Naive thymus-derived CD4-positive, alpha-beta T cell (primary cell): ENCODE measurements at regions of chr2 and their contacts with region 1.

Region 1: DNA sequence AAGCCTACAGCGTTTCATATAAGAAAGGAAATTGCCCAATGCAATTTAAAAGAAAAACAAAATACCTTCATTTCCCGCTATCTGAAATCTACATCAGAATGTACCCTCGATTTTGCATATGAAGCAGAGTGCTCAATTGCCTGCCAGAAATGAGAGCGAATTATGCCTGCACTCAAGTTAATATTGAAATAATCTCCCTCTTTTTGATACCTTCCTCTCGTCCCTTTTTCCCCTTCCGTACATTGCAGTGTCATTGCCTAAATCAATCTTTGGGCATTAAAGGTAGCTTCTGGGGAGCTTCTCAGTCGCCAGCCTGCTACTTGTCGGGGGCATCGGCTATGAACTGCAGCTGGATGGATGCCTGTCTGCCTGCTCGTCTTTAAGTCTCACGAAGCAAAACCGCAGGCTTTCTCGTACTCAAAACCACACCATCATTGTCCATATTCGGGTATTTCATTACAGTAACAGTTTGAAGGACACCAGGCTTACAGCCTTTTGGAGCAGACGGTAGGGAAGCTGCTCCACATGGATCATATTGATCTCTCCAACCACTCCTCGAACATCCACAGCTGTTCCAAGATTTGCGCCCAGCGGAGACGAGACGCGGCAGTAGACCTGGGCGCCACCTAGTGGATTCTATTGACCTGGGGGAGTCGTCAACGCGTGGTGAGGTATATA is 64.0 kb upstream of the HNRNPA3 start:
- DNase-seq: peak; percentile 60 to 77 (median 71)
- ATAC-seq: peak; percentile 96
- H3K4me3 ChIP-seq: peak overlapping the region; percentile 72
- H3K4me3 Mint-ChIP-seq: peak overlapping the region; percentile 84 to 94 (median 89)
- H3K27ac ChIP-seq: no peak overlapping the region
- H3K27ac Mint-ChIP-seq: peak overlapping the region in 8 of 9 donors; percentile 3 to 33 (median 11)
- H3K4me1 ChIP-seq: peaks cover 6 to 14% of the 10 kb centered on the region in 2 donors
- H3K4me1 Mint-ChIP-seq: peaks cover 8 to 16% (median 11%) of the 10 kb centered on the region in 7 donors
- H3K27me3 ChIP-seq: peaks cover 0 to 3% of the 10 kb centered on the region in 2 donors
- H3K27me3 Mint-ChIP-seq: peaks cover 33 to 73% (median 52%) of the 10 kb centered on the region in 5 donors

Region 2: DNA sequence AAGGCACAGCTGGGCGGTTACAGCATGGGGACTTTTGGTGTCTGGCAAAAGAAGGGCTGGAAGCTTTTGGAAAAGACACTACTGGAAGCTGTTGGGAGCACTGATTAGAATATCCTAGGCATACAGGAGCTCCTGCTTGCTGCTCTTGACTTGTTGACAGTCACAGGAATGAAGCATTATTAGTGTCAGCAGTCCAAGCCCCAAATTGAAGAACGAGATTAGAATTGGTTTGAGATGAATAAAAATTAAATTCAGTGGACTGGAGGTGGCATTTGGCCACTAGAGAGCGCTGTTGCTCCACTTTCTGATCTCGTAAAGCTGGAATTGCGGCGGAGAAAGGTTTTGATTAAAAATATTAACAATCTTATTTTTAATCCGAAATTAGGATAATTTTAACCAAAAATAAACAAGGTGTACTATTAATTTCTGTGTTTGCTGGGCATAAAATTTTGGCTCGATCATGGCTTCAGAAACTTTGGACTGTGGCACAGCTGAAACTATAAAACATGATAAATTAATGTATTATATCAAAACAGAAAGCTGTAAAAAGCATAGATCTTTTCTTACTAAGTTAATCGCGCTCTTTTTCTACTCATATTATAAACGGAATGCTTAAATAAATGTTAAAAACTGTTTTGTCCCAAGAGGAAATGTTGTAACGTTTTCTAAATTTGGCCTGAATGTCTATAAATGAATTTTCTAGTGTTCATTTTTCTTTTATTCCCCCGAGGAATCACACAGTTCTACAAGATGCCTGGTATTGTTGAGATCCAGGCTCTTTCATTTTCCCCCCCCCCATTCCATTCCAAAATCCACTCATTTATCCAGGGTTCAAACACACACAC is 1021.5 kb before region 1 on chr2:
- CTCF ChIA-PET with region 1: interaction called, 5 read pairs
- POLR2A ChIA-PET with region 1: no interaction called
- intact Hi-C with region 1: loop called (anchors 1 kb)
- DNase-seq: peak in 8 of 9 donors; percentile 26 to 68 (median 54)
- ATAC-seq: peak; percentile 51
- H3K4me3 ChIP-seq: no peak overlapping the region
- H3K4me3 Mint-ChIP-seq: peak overlapping the region in 4 of 10 donors; percentile 17 to 67 (median 38)
- H3K27ac ChIP-seq: no peak overlapping the region
- H3K27ac Mint-ChIP-seq: peak overlapping the region in 3 of 9 donors; percentile 8 to 63 (median 62)
- H3K4me1 ChIP-seq: peaks cover 3 to 20% of the 10 kb centered on the region in 2 donors
- H3K4me1 Mint-ChIP-seq: peaks cover 17 to 51% (median 41%) of the 10 kb centered on the region in 7 donors
- H3K27me3 ChIP-seq: peaks cover 33 to 74% of the 10 kb centered on the region in 2 donors
- H3K27me3 Mint-ChIP-seq: peaks cover 71 to 80% (median 76%) of the 10 kb centered on the region in 5 donors

Region 3: DNA sequence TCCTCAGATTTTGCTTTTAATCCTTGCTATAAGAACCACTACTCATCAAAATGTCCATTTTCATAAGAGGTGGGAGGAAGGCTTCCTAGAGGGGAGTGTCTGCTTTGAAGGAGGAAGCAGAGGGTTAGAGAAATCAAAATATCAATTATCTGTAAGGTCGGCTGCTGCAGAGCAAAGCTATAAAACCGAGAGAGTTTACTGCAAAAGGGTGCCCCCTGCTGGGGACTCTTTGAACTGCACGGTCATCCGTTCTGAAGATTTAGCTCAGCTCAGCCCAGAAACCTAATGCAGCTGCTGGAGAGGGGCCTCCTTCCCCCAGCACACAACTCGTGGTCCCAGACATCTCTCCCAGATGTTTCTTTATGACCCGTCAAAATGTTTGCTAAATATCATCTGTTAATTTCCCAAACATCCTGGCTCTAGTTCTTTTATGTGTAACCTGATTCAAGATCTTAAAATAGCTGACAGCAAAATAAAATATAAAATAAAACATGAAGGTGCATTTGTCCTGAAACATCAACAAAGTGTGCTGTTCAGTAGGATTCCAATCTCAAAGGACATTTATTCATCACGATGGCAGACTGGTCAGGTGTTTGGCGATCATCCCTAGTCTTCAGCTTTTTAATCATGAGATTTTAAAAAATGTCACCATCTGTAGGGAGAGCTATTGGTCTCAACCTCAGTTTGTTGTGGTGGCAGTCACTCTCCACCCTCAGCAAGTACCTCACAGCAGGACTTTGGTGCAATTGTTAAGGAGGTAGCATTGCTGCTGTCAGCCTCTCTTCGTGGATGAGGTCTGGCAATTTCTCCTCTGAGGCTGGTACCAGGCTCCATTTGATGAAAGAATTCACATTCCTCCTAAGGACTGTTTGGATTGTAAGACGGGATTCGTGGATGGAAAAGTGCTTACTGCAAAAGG is 693.5 kb before region 1 on chr2:
- CTCF ChIA-PET with region 1: no interaction called
- POLR2A ChIA-PET with region 1: no interaction called
- intact Hi-C with region 1: loop called (anchors 2 to 5 kb)
- DNase-seq: peak; percentile 36 to 80 (median 65)
- ATAC-seq: peak; percentile 84
- H3K4me3 ChIP-seq: no peak overlapping the region
- H3K4me3 Mint-ChIP-seq: no peak overlapping the region
- H3K27ac ChIP-seq: no peak overlapping the region
- H3K27ac Mint-ChIP-seq: no peak overlapping the region
- H3K4me1 ChIP-seq: no peaks in the 10 kb centered on the region
- H3K4me1 Mint-ChIP-seq: no peaks in the 10 kb centered on the region
- H3K27me3 ChIP-seq: no peaks in the 10 kb centered on the region
- H3K27me3 Mint-ChIP-seq: peaks cover 42 to 56% (median 46%) of the 10 kb centered on the region in 5 donors

Region 4: DNA sequence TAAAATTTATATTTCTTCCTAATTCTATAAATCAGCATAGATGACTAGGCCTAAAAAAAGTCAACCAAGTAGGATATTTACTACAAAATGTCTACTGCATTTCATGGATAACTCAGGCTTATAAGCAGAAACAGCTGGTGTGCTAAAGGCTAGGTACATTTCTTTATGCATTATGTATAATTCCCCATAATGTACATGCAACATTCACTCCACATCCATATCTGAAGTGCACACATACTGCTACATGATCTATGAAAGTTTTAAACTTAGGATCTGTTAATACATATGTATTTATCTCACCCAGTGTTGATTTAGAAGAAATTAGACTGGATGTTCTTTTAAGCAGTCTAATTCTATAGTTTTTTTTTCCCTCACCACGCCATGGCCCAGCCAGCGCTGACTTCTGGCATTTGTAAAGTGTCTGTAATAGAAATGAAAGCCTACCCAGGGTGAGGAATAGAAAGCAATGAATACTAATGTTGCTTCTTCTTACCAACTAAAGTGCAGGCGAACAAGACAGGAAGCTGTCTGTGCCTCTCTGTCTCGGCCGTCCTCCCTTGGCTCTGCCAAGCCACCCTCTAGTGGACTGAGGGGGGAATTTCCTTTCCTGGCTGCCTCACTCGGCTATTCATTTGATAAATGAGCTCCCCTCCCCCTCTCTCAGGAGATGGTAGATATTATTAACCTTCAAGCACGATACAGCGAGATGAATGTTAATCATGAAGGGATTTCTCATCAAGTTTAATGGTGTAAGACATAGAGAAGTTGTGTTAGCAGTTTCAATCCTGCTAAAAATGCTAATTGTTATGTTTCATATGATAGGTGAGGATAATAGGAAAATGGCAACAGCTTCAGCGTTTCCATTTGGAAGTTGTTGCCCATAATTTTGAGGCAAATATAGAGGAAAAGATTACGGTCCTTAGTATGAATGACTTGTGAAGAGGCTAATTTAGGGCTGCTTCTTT is 494.9 kb before region 1 on chr2:
- CTCF ChIA-PET with region 1: interaction called, 5 read pairs
- POLR2A ChIA-PET with region 1: no interaction called
- intact Hi-C with region 1: loop called (anchors 1 kb)
- DNase-seq: peak in 4 of 9 donors; percentile 23 to 26 (median 23)
- ATAC-seq: peak; percentile 49
- H3K4me3 ChIP-seq: no peak overlapping the region
- H3K4me3 Mint-ChIP-seq: no peak overlapping the region
- H3K27ac ChIP-seq: no peak overlapping the region
- H3K27ac Mint-ChIP-seq: no peak overlapping the region
- H3K4me1 ChIP-seq: no peaks in the 10 kb centered on the region
- H3K4me1 Mint-ChIP-seq: peaks cover 0 to 14% (median 6%) of the 10 kb centered on the region in 7 donors
- H3K27me3 ChIP-seq: no peaks in the 10 kb centered on the region
- H3K27me3 Mint-ChIP-seq: peaks cover 45 to 67% (median 65%) of the 10 kb centered on the region in 5 donors

Region 5: GRCh38 chr2:176924909-176925534 is 223.6 kb before region 1 on chr2:
- CTCF ChIA-PET with region 1: no interaction called
- POLR2A ChIA-PET with region 1: no interaction called
- intact Hi-C with region 1: loop called in 1 of 2 experiments (anchors 5 kb)
- DNase-seq: no peak
- ATAC-seq: no peak
- H3K4me3 ChIP-seq: no peak overlapping the region
- H3K4me3 Mint-ChIP-seq: no peak overlapping the region
- H3K27ac ChIP-seq: no peak overlapping the region
- H3K27ac Mint-ChIP-seq: no peak overlapping the region
- H3K4me1 ChIP-seq: no peaks in the 10 kb centered on the region
- H3K4me1 Mint-ChIP-seq: no peaks in the 10 kb centered on the region
- H3K27me3 ChIP-seq: no peaks in the 10 kb centered on the region
- H3K27me3 Mint-ChIP-seq: peaks cover 0 to 11% (median 0%) of the 10 kb centered on the region in 5 donors

Region 6: GRCh38 chr2:176978921-176979320 is 169.7 kb before region 1 on chr2:
- CTCF ChIA-PET with region 1: no interaction called
- POLR2A ChIA-PET with region 1: no interaction called
- intact Hi-C with region 1: no loop called
- DNase-seq: no peak
- ATAC-seq: no peak
- H3K4me3 ChIP-seq: no peak overlapping the region
- H3K4me3 Mint-ChIP-seq: no peak overlapping the region
- H3K27ac ChIP-seq: no peak overlapping the region
- H3K27ac Mint-ChIP-seq: no peak overlapping the region
- H3K4me1 ChIP-seq: no peaks in the 10 kb centered on the region
- H3K4me1 Mint-ChIP-seq: no peaks in the 10 kb centered on the region
- H3K27me3 ChIP-seq: peaks cover 0 to 3% of the 10 kb centered on the region in 2 donors
- H3K27me3 Mint-ChIP-seq: peaks cover 2 to 33% (median 6%) of the 10 kb centered on the region in 5 donors

Region 7: DNA sequence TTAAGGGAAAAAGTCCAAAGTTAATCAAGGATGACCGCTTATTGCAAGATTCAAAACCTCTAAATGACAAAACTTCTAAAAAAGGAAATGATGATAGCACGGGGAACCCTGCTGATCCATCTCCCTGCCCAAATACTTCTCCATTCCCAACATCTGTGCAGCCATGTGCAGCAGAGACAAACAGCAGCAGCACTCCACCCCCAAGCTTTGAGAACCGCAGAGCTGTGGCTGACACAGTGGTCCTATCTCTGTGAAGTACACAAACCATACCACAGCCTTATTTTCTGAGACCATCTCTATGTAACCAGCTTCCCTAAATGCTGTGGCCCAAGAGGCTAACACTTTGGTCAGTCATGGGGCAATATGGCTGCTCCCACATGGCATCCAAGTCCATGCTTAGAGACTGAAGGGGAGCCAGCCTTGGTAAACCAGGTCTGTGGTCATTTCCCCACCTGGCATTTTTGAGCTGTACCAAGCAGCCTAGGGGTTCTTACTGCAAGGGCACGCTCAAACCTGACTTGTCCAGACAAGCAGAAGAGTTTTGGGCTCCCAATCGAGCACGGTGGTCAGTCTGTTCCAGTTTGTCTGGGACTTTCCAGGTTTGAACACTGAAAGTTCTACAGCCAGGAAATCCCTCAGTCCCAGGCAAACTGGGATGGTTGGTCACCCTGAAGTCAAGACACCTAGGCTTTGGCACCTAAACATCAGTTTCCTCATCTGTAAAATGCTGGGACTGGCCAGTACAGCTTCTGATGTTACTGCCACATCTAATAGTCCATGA is 133.0 kb after region 1 on chr2:
- CTCF ChIA-PET with region 1: no interaction called
- POLR2A ChIA-PET with region 1: no interaction called
- intact Hi-C with region 1: no loop called
- DNase-seq: no peak
- ATAC-seq: peak; percentile 88
- H3K4me3 ChIP-seq: no peak overlapping the region
- H3K4me3 Mint-ChIP-seq: no peak overlapping the region
- H3K27ac ChIP-seq: no peak overlapping the region
- H3K27ac Mint-ChIP-seq: peak overlapping the region in 1 of 9 donors; percentile 66
- H3K4me1 ChIP-seq: no peaks in the 10 kb centered on the region
- H3K4me1 Mint-ChIP-seq: peaks cover 0 to 21% (median 0%) of the 10 kb centered on the region in 7 donors
- H3K27me3 ChIP-seq: no peaks in the 10 kb centered on the region
- H3K27me3 Mint-ChIP-seq: no peaks in the 10 kb centered on the region

Region 8: GRCh38 chr2:177419274-177419673 is 270.7 kb after region 1 on chr2:
- CTCF ChIA-PET with region 1: interaction called, 5 read pairs
- POLR2A ChIA-PET with region 1: no interaction called
- intact Hi-C with region 1: loop called in 1 of 2 experiments (anchors 1 kb)
- DNase-seq: no peak
- ATAC-seq: no peak
- H3K4me3 ChIP-seq: no peak overlapping the region
- H3K4me3 Mint-ChIP-seq: no peak overlapping the region
- H3K27ac ChIP-seq: no peak overlapping the region
- H3K27ac Mint-ChIP-seq: peak overlapping the region in 1 of 9 donors; percentile 22
- H3K4me1 ChIP-seq: no peaks in the 10 kb centered on the region
- H3K4me1 Mint-ChIP-seq: peaks cover 5 to 54% (median 27%) of the 10 kb centered on the region in 7 donors
- H3K27me3 ChIP-seq: no peaks in the 10 kb centered on the region
- H3K27me3 Mint-ChIP-seq: no peaks in the 10 kb centered on the region

Region 9: GRCh38 chr2:177763532-177764265 is 615.1 kb after region 1 on chr2:
- CTCF ChIA-PET with region 1: no interaction called
- POLR2A ChIA-PET with region 1: no interaction called
- intact Hi-C with region 1: loop called in 1 of 2 experiments (anchors 5 kb)
- DNase-seq: peak; percentile 51 to 75 (median 68)
- ATAC-seq: peak; percentile 95
- H3K4me3 ChIP-seq: peak overlapping the region; percentile 20
- H3K4me3 Mint-ChIP-seq: peak overlapping the region in 8 of 10 donors; percentile 20 to 55 (median 30)
- H3K27ac ChIP-seq: no peak overlapping the region
- H3K27ac Mint-ChIP-seq: peak overlapping the region in 1 of 9 donors; percentile 42
- H3K4me1 ChIP-seq: peaks cover 0 to 4% of the 10 kb centered on the region in 2 donors
- H3K4me1 Mint-ChIP-seq: peaks cover 0 to 11% (median 6%) of the 10 kb centered on the region in 7 donors
- H3K27me3 ChIP-seq: no peaks in the 10 kb centered on the region
- H3K27me3 Mint-ChIP-seq: peaks cover 10 to 28% (median 24%) of the 10 kb centered on the region in 5 donors